Uterus (tissue), 4 donors: ENCODE measurements at regions of chr3 and their contacts with region 1.

Region 1: DNA sequence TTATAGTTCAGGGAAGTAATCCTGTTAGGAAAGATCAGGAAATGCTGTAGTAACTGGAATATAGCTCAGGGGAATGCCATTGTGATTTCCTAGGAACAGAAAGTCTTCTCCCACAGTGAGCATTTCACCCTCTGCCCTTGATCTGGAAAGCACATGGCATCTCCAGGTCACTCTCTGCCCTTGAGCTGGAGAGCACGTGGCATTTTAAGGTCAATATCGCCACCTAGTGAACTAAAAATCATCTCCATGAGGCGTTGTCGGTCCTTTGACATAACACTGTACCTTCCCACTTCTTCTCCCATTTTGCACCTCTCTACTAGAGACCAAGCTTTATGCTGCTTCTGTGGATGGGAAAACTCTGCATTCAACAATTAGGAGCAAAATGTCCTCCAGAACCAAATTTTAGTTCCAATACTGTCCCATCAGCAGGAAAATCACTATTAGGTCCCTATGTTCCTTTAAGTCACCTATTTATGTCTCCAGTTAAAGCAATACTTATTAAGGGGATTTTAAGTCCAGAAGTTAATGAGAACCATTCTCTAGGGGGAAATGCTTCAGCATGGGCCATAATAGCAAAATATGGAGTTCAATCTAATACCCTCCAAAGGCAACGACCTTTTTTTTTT is 54.7 kb upstream of the GK5 start:
- DNase-seq: peak; percentile 16 to 42
- H3K4me3 ChIP-seq: no peak overlapping the region
- H3K27ac ChIP-seq: no peak overlapping the region
- H3K4me1 ChIP-seq: no peaks in the 10 kb centered on the region
- H3K27me3 ChIP-seq: no peaks in the 10 kb centered on the region
- CTCF ChIP-seq: peak; percentile 56 to 73 (median 65)
- POLR2A ChIP-seq: no peak

Region 2: GRCh38 chr3:142129516-142130171 is 150.4 kb before region 1 on chr3:
- intact Hi-C with region 1: loop called (anchors 10 kb)
- DNase-seq: no peak
- H3K4me3 ChIP-seq: no peak overlapping the region
- H3K27ac ChIP-seq: no peak overlapping the region
- H3K4me1 ChIP-seq: no peaks in the 10 kb centered on the region
- H3K27me3 ChIP-seq: no peaks in the 10 kb centered on the region
- CTCF ChIP-seq: no peak
- POLR2A ChIP-seq: no peak

Region 3: GRCh38 chr3:142366436-142366835 is 86.4 kb after region 1 on chr3:
- intact Hi-C with region 1: no loop called
- DNase-seq: no peak
- H3K4me3 ChIP-seq: no peak overlapping the region
- H3K27ac ChIP-seq: no peak overlapping the region
- H3K4me1 ChIP-seq: no peaks in the 10 kb centered on the region
- H3K27me3 ChIP-seq: no peaks in the 10 kb centered on the region
- CTCF ChIP-seq: no peak
- POLR2A ChIP-seq: no peak

Region 4: DNA sequence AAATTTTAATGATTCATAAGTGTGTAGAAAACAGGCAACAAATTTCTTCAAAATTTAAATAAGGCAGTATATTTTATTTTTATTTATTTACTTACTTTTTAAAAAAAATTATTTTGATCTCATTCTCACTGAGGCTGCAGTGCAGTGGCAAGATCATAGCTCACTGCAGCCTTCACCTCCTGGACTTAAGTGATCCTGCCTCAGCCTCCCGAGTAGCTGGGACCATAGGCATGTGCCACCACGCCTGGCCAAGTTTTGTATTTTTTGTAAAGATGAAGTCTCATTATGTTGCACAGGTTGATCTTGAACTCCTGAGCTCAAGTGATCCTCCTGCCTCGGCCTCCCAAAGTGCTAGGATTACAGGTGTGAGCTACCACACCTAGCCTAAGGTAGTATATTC is 229.0 kb after region 1 on chr3:
- intact Hi-C with region 1: no loop called
- DNase-seq: no peak
- H3K4me3 ChIP-seq: no peak overlapping the region
- H3K27ac ChIP-seq: no peak overlapping the region
- H3K4me1 ChIP-seq: no peaks in the 10 kb centered on the region
- H3K27me3 ChIP-seq: no peaks in the 10 kb centered on the region
- CTCF ChIP-seq: no peak
- POLR2A ChIP-seq: no peak